Activated CD4-positive, alpha-beta memory T cell treated with anti-CD3 and anti-CD28 coated beads for 36 hours (primary cell): ENCODE measurements at regions of chr1 and their contacts with region 1.

Region 1: GRCh38 chr1:198157241-198157846 is 546 bp downstream of the NEK7 start:
- DNase-seq: peak; percentile 89
- H3K4me3 Mint-ChIP-seq: peak overlapping the region; percentile 98
- H3K27ac Mint-ChIP-seq: peak overlapping the region; percentile 97
- H3K4me1 Mint-ChIP-seq: peaks cover 33% of the 10 kb centered on the region
- H3K27me3 Mint-ChIP-seq: no peaks in the 10 kb centered on the region

Region 2: DNA sequence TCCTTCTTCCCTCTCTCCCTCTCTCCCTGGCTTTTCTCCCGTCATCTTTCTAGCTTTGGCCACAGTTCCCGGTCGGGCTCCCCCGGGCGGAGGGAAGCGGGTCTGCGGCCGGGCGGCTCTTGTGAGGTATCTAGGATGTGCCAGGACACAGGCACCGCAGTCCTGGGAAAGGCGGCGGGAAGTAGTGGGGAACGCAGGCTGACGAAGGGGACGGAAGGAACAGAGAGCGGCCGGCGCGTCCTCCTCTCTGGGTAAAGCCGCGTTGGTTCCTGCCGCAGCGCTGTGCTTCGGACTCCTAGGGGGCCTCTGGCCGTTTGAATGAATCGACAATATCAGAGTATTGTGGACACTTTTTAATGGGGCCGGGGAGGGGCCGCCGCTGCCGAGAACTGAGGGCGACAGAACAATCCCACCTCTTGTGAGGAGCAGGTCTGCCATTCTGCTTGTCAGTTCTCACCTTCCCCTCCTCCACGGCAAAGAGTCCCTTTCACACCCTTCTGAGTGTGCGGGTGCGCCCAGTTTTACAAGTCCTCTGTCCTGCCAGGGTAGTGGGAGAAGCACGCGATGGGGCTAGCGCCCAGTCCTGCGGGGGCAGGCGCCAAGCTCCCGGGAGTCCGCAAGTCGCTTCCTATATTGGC is 241.4 kb before region 1 on chr1:
- CTCF ChIA-PET with region 1: no interaction called
- POLR2A ChIA-PET with region 1: no interaction called
- intact Hi-C with region 1: loop called (anchors 5 kb)
- DNase-seq: no peak
- H3K4me3 Mint-ChIP-seq: peak overlapping the region; percentile 49
- H3K27ac Mint-ChIP-seq: no peak overlapping the region
- H3K4me1 Mint-ChIP-seq: peaks cover 77% of the 10 kb centered on the region
- H3K27me3 Mint-ChIP-seq: peaks cover 92% of the 10 kb centered on the region

Region 3: GRCh38 chr1:198141668-198142351 is 15.5 kb before region 1 on chr1:
- CTCF ChIA-PET with region 1: interaction called, 6 read pairs
- POLR2A ChIA-PET with region 1: interaction called, 3 read pairs
- intact Hi-C with region 1: loop called (anchors 1 kb)
- DNase-seq: no peak
- H3K4me3 Mint-ChIP-seq: no peak overlapping the region
- H3K27ac Mint-ChIP-seq: no peak overlapping the region
- H3K4me1 Mint-ChIP-seq: peaks cover 4% of the 10 kb centered on the region
- H3K27me3 Mint-ChIP-seq: peaks cover 7% of the 10 kb centered on the region

Region 4: DNA sequence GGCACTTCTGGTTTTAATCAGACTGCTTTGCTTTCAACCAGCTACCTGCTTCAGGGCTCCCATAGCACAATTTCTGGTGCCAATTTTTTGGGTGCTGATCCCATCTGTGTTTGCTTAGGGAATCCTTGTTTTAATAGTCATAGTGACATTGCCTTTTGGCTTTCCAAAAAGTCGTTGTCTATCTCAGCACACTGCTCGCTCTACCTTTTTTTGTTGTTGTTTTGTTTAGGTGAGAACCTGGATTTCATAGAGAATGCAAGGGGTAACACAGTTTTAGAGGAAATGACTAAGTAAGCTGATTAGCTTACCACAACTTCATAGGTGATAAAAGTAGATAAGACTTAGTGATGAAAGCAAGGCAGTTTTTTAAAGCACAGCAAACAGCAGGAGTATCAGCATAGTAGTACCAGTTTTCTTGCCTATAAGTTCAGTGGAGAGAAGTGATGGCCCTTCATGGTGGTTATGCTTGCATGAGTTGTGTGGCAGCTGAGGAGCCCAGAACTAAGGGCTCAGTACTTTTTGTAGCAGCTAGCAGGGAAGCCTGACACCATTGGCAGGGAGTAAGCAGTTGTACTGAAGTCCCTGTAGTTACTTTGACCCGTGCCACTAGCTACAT is 30.7 kb after region 1 on chr1:
- CTCF ChIA-PET with region 1: no interaction called
- POLR2A ChIA-PET with region 1: interaction called, 4 read pairs
- intact Hi-C with region 1: loop called (anchors 1 kb)
- DNase-seq: no peak
- H3K4me3 Mint-ChIP-seq: peak overlapping the region; percentile 57
- H3K27ac Mint-ChIP-seq: peak overlapping the region; percentile 78
- H3K4me1 Mint-ChIP-seq: peaks cover 77% of the 10 kb centered on the region
- H3K27me3 Mint-ChIP-seq: no peaks in the 10 kb centered on the region

Region 5: GRCh38 chr1:198465201-198466144 is 308.1 kb after region 1 on chr1:
- CTCF ChIA-PET with region 1: interaction called, 3 read pairs
- POLR2A ChIA-PET with region 1: no interaction called
- intact Hi-C with region 1: loop called (anchors 1 kb)
- DNase-seq: no peak
- H3K4me3 Mint-ChIP-seq: no peak overlapping the region
- H3K27ac Mint-ChIP-seq: no peak overlapping the region
- H3K4me1 Mint-ChIP-seq: peaks cover 12% of the 10 kb centered on the region
- H3K27me3 Mint-ChIP-seq: no peaks in the 10 kb centered on the region